ENCODE measurements at regions of chr19 and their contacts with region 1.

Region 1: GRCh38 chr19:38929929-38930775 is at the start of gene SARS2:
- DNase-seq: peak; percentile 95
- ATAC-seq: peak; percentile 69
- H3K4me3 Mint-ChIP-seq: peak within 1 kb of the TSS; percentile 81
- H3K27ac Mint-ChIP-seq: peak within 1 kb of the TSS; percentile 92
- H3K4me1 Mint-ChIP-seq: peaks cover 28% of the 10 kb centered on the region
- H3K27me3 Mint-ChIP-seq: no peaks in the 10 kb centered on the region
- total RNA-seq, gene SARS2: 36.7 to 39.4 TPM

Region 2: DNA sequence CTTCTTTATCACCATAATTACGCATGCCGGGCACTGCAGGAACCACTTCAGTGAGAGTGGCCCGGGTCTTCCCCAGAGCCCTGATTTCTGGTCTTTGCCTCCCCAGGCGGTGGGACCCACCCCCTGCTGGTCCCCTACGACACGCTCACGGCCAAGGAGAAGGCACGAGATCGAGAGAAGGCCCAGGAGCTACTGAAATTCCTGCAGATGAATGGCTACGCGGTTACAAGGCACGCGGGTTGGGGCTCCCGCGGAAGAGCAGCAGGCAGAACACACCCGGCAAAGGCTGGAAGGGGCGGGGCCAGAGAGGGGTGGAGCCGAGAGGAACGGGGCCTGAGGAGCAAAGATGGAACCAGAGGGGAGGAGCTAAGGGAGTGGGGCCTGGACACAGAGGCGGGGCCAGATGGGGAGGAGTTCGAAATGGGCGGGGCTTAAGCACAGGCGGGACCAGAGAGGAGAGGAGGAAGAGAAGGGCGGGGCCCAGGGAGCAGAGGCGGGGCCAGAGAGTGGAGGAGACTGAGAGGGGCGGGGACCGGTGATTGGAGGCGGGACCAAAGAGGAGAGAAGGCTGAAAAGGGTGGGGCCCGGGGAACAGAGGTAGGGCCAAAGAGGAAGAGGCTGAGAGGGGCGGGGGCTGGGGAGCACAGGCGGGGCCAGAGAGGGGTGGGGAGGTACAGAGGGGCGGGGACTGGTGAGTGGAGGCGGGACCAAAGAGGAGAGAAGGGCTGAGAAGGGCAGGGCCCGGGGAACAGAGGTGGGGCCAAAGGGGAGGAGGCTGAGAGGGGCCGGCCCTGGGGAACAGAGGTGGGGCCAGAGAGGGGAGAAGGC is 423.2 kb before region 1 on chr19:
- CTCF ChIA-PET with region 1: no interaction called
- POLR2A ChIA-PET with region 1: no interaction called
- intact Hi-C with region 1: loop called in 1 of 2 experiments (anchors 1 kb)
- DNase-seq: peak; percentile 98
- ATAC-seq: peak; percentile 94
- H3K4me3 Mint-ChIP-seq: no peak overlapping the region
- H3K27ac Mint-ChIP-seq: no peak overlapping the region
- H3K4me1 Mint-ChIP-seq: peaks cover 6% of the 10 kb centered on the region
- H3K27me3 Mint-ChIP-seq: peaks cover 2% of the 10 kb centered on the region

Region 3: DNA sequence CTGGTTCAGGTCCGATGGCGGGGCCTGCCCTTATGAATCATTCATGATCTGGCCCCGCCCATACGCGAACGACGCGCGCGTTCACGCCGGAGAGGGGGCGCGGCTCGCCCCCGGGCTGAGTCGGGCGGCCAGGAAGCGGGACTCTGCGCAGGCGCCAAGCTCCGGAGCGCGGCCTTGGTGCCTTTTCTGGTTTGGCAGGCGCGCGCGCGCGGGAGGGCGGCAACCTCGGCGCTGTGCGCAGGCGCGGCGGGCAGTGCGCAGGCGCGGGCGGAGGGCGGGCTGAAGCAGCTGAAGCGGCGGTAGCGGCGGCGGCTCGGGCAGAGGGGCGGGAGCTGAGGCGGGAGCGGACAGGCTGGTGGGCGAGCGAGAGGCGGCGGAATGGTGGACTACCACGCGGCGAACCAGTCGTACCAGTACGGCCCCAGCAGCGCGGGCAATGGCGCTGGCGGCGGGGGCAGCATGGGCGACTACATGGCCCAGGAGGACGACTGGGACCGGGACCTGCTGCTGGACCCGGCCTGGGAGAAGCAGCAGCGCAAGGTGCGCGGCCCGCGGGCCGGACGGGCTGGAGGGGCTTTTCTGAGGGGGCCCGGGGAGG is 282.7 kb before region 1 on chr19 and contains the start of gene ACTN4:
- CTCF ChIA-PET with region 1: interaction called, 6 read pairs
- POLR2A ChIA-PET with region 1: no interaction called
- intact Hi-C with region 1: loop called in 1 of 2 experiments (anchors 1 kb)
- DNase-seq: peak; percentile 100
- ATAC-seq: peak; percentile 92
- H3K4me3 Mint-ChIP-seq: peak within 1 kb of the TSS; percentile 98
- H3K27ac Mint-ChIP-seq: peak within 1 kb of the TSS; percentile 81
- H3K4me1 Mint-ChIP-seq: peaks cover 39% of the 10 kb centered on the region
- H3K27me3 Mint-ChIP-seq: peaks cover 10% of the 10 kb centered on the region
- total RNA-seq, gene ACTN4: 181 to 182 TPM

Region 4: GRCh38 chr19:38849860-38850435 is 80.2 kb before region 1 on chr19 and contains the start of gene HNRNPL:
- CTCF ChIA-PET with region 1: interaction called, 3 read pairs
- POLR2A ChIA-PET with region 1: interaction called, 6 read pairs
- intact Hi-C with region 1: loop called (anchors 1 kb)
- DNase-seq: peak; percentile 99
- ATAC-seq: peak; percentile 71
- H3K4me3 Mint-ChIP-seq: peak within 1 kb of the TSS; percentile 97
- H3K27ac Mint-ChIP-seq: peak within 1 kb of the TSS; percentile 99
- H3K4me1 Mint-ChIP-seq: peaks cover 42% of the 10 kb centered on the region
- H3K27me3 Mint-ChIP-seq: no peaks in the 10 kb centered on the region
- total RNA-seq, gene HNRNPL: 714 to 722 TPM

Region 5: GRCh38 chr19:38904581-38905539 is 25.3 kb before region 1 on chr19:
- CTCF ChIA-PET with region 1: interaction called, 23 read pairs
- POLR2A ChIA-PET with region 1: interaction called, 13 read pairs
- intact Hi-C with region 1: no loop called
- DNase-seq: no peak
- ATAC-seq: no peak
- H3K4me3 Mint-ChIP-seq: no peak overlapping the region
- H3K27ac Mint-ChIP-seq: no peak overlapping the region
- H3K4me1 Mint-ChIP-seq: peaks cover 30% of the 10 kb centered on the region
- H3K27me3 Mint-ChIP-seq: no peaks in the 10 kb centered on the region

Region 6: GRCh38 chr19:39397360-39398296 is 467.5 kb after region 1 on chr19:
- CTCF ChIA-PET with region 1: no interaction called
- POLR2A ChIA-PET with region 1: no interaction called
- intact Hi-C with region 1: loop called in 1 of 2 experiments (anchors 2 kb)
- DNase-seq: peak; percentile 97
- ATAC-seq: peak; percentile 58
- H3K4me3 Mint-ChIP-seq: peak overlapping the region; percentile 52
- H3K27ac Mint-ChIP-seq: peak overlapping the region; percentile 97
- H3K4me1 Mint-ChIP-seq: peaks cover 59% of the 10 kb centered on the region
- H3K27me3 Mint-ChIP-seq: no peaks in the 10 kb centered on the region